ENCODE measurements at regions of chr17 and their contacts with region 1.

Region 1: DNA sequence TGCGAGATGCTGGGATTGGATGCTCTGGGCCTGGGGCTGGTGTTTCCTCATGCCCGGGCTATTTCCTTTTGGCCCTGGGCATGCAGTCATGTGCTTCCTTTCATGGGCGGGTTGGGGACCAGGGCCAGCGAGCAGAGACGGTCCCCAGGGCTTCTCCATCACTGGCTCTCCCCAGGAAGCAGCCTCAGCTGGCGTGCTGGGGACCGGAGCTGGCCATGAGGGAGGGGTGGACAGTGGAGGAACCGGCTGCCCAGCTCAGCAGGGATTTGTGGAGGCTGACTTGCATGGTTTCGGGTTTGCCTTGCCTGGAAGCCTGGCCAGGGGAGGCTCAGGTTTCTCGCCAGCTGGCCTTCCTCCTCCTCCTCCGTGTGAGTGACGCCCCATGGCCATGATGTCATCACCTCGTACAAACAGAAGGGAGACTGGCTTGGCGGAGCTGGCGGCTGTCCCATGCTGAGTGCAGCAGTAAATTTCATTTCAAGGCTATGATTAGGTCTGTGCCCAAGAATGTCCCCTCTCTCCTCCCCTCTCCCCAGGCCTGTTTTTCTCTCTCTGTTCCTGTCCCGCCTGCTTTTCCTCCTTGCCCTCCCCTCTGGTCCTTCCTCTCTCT is 8.9 kb upstream of the TIMP2 start:
- DNase-seq: peak; percentile 95 to 96
- ATAC-seq: peak; percentile 91 to 92
- H3K4me3 ChIP-seq: peak overlapping the region in 3 of 4 donors; percentile 21 to 33 (median 28)
- H3K27ac ChIP-seq: peak overlapping the region; percentile 70 to 82 (median 82)
- H3K4me1 ChIP-seq: peaks cover 24 to 28% of the 10 kb centered on the region in 2 donors
- H3K27me3 ChIP-seq: no peaks in the 10 kb centered on the region
- CTCF ChIP-seq: no peak
- POLR2A ChIP-seq: peak; percentile 6 to 24

Region 2: GRCh38 chr17:78872486-78873115 is 61.5 kb before region 1 on chr17:
- in situ Hi-C with region 1: no loop called
- intact Hi-C with region 1: no loop called
- DNase-seq: no peak
- ATAC-seq: no peak
- H3K4me3 ChIP-seq: no peak overlapping the region
- H3K27ac ChIP-seq: peak overlapping the region in 1 of 4 donors; percentile 62
- H3K4me1 ChIP-seq: peaks cover 29 to 34% of the 10 kb centered on the region in 2 donors
- H3K27me3 ChIP-seq: no peaks in the 10 kb centered on the region
- CTCF ChIP-seq: no peak
- POLR2A ChIP-seq: no peak

Region 3: DNA sequence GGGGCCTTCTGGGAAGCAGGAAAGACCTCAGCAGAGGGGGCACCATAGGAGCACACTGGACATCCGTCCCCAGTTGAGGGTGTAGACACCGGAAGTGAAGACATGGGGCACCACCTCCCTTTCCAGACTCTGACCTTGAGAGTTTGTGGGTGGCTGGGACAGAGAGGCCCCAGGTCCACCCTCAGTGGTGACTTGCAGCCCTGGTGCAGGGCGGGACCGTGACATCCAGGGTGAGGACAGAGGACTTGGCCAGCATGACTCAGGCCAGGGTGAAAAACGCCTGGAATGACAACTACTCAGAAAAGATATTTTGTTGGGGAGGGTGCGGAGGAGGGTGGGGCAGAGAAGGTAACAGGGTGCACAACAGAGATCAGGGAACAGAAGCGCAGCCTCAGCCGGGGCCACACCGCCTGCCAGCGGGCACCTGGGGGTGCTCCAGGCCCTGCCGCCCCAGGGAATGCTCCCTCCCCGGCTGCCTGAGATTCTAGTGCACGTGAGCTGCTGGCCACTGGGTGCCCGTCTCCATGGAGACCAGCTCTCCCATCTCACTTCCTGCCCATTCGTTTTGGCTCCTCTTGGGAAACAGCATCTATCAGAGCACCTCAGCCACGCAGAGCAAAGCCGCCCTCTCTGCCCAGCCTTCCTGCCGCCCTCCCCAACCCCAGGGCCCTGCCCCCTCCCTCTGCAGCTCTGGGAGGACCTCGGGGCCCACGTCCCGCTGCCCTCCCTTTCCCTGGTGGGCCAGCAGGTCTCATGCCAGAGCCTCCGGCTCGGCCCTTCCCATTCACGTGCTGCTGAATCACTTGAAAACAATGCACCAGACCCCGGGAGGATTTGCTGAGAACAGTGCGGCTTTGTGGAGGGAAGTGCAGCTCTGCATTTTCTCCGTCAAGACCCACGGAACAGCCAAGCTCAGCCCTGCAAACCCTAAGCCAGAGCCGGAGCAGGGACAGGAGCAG is 50.6 kb before region 1 on chr17:
- in situ Hi-C with region 1: no loop called
- intact Hi-C with region 1: loop called (anchors 5 kb)
- DNase-seq: peak; percentile 69 to 82
- ATAC-seq: peak; percentile 61 to 67
- H3K4me3 ChIP-seq: peak overlapping the region; percentile 1 to 37 (median 26)
- H3K27ac ChIP-seq: peak overlapping the region; percentile 77 to 85 (median 81)
- H3K4me1 ChIP-seq: peaks cover 31 to 34% of the 10 kb centered on the region in 2 donors
- H3K27me3 ChIP-seq: no peaks in the 10 kb centered on the region
- CTCF ChIP-seq: no peak
- POLR2A ChIP-seq: peak; percentile 32 to 69

Region 4: GRCh38 chr17:78979780-78980623 is 45.9 kb after region 1 on chr17 and contains the start of gene LGALS3BP:
- in situ Hi-C with region 1: no loop called
- intact Hi-C with region 1: loop called (anchors 5 kb)
- DNase-seq: peak in 1 of 2 donors; percentile 32
- ATAC-seq: peak; percentile 61 to 68
- H3K4me3 ChIP-seq: peak within 1 kb of the TSS in 3 of 4 donors; percentile 4 to 39 (median 36)
- H3K27ac ChIP-seq: peak within 1 kb of the TSS; percentile 18 to 63 (median 38)
- H3K4me1 ChIP-seq: peaks cover 23 to 29% of the 10 kb centered on the region in 2 donors
- H3K27me3 ChIP-seq: no peaks in the 10 kb centered on the region
- CTCF ChIP-seq: no peak
- POLR2A ChIP-seq: no peak
- total RNA-seq, gene LGALS3BP: 15.0 to 45.9 (median 23.0) TPM

Region 5: DNA sequence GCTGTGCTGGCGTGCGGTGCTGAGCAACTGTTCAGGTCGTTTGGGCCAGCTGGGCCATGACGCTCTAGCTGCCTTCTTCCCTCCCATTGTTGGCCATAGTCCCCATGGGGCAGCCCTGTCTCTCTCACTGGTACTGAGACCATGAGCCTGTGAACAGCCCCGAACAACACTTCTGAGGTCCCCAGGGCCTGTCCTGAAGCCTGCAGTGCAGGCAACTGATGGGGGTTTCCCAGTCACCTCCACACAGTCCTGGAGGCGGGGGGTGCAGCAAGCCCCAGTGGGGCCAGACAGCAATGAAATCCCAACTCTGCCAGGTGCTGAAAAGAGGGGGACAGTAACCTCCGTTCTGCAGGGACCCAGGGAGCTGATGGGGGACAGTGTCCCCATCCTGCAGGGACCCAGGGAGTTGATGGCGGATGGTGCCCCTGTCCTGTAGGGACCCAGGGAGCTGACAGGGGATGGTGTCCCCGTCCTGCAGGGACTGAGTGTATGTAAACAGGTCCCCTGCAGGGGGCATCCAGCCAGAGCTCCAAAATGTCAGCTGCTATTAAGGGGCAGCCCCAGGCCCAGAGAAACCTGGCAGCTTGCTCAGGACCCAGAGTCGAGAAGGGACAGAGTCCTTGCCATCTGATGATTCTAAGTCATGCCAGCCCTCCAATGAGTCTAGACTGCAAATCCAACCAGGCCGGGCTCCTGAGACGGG is 171.0 kb after region 1 on chr17:
- in situ Hi-C with region 1: no loop called
- intact Hi-C with region 1: no loop called
- DNase-seq: no peak
- ATAC-seq: no peak
- H3K4me3 ChIP-seq: no peak overlapping the region
- H3K27ac ChIP-seq: no peak overlapping the region
- H3K4me1 ChIP-seq: no peaks in the 10 kb centered on the region
- H3K27me3 ChIP-seq: peaks cover 31 to 39% (median 33%) of the 10 kb centered on the region in 3 donors
- CTCF ChIP-seq: no peak
- POLR2A ChIP-seq: no peak

Measured in gastrocnemius medialis (tissue), 4 donors.